Adrenal gland (tissue), 19 donors: ENCODE measurements at regions of chr19 and their contacts with region 1.

Region 1: GRCh38 chr19:30222428-30222873 is 149.7 kb upstream of the ZNF536 start:
- DNase-seq: peak in 2 of 7 donors; percentile 19 to 37
- H3K4me3 ChIP-seq: peak overlapping the region in 1 of 4 donors; percentile 40
- H3K27ac ChIP-seq: no peak overlapping the region
- H3K4me1 ChIP-seq: peaks cover 7 to 16% of the 10 kb centered on the region in 2 donors
- H3K27me3 ChIP-seq: peaks cover 9% of the 10 kb centered on the region
- CTCF ChIP-seq: peak in 4 of 6 experiments; percentile 49 to 74 (median 58)
- POLR2A ChIP-seq: no peak

Region 2: DNA sequence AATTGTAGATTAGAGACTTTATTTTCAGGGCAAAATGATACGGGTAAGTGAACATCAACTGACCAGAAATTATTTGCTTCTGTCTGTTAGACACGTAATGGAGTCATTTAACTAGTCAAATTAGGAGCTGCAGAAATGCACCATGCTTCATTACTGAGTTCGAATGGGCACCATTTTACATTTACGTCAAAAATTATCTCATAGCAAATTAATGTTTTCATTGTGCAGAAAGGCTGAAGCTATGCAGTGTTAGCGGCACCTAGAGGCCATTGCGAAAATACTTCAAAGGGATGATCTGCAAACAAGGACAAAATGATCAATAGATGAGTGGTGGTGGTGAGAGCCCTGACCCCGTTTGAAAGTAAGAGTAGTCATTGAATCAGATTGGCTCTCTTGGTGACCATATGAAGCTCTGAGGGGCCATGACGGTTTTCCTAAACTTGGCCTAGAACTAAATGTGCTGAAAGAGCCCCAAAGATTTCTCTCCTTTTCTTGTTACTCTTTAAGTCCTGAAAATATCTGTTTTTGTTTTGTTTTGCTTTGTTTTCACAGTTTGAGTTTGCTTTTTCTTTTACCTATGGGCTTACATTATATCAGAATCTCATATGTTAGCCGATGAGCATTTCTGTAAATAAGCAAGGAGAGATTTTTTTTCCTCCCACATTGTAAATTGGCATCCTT is 427.6 kb after region 1 on chr19:
- intact Hi-C with region 1: loop called in 1 of 2 experiments (anchors 5 kb)
- DNase-seq: peak in 6 of 7 donors; percentile 41 to 78 (median 60)
- H3K4me3 ChIP-seq: no peak overlapping the region
- H3K27ac ChIP-seq: no peak overlapping the region
- H3K4me1 ChIP-seq: no peaks in the 10 kb centered on the region
- H3K27me3 ChIP-seq: no peaks in the 10 kb centered on the region
- CTCF ChIP-seq: peak; percentile 75 to 82 (median 78)
- POLR2A ChIP-seq: no peak